ENCODE measurements at regions of chr5 and their contacts with region 1.

Region 1: DNA sequence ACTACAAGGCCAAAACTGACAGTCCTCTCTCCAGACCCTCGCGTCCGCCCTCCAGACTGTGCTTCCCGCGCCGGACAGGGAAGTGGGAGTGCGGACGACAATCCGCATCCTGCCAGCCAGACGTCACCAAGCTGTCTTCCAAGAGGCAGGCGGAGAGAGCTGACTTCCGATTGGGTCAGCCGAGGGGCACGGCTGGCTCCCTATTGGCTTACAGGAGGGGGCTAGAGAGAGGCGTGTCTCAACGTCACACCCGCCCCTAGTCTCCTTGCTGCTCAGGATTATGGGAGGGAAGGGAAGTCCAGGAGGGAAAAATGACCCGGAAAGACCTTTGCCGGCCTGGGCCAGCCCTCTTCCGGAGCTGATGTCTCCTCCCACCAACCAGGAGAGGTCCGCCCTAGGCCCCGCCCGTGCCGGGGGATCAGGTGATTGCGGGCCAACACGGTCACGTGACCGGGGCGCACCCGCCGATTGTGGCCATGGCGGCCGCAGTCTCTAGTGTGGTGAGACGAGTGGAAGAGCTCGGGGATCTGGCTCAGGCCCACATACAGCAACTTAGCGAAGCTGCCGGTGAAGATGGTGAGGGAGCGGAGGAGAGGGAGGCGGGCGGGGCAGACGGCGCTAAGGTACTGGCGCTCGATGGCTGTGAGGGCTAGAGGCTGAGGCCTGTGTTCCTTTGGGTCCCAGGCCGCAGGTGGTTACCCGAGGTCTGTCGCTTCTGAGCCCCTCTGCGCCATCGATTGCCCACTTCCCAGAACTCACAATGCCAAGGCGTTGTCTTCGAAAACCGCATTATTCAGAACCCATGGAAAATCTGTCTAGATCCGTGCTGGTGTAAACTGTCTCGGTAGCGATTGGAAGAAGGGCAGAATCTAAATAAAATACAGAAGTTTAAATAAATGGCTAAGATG is at the start of gene RIMOC1:
- DNase-seq: peak; percentile 99 to 100
- H3K4me3 ChIP-seq: peak within 1 kb of the TSS; percentile 83
- H3K27ac ChIP-seq: peak within 1 kb of the TSS; percentile 68
- H3K4me1 ChIP-seq: peaks cover 16% of the 10 kb centered on the region
- H3K27me3 ChIP-seq: no peaks in the 10 kb centered on the region
- CTCF ChIP-seq: no peak
- total RNA-seq, gene RIMOC1: 40.1 and 68.6 TPM in 2 replicates

Region 2: GRCh38 chr5:40834849-40835787 is 1069.0 kb before region 1 on chr5 and contains the start of gene RPL37:
- CTCF ChIA-PET with region 1: no interaction called
- POLR2A ChIA-PET with region 1: interaction called, 24 read pairs
- intact Hi-C with region 1: loop called (anchors 5 kb)
- DNase-seq: peak; percentile 97 to 100
- H3K4me3 ChIP-seq: peak within 1 kb of the TSS; percentile 86
- H3K27ac ChIP-seq: peak within 1 kb of the TSS; percentile 96
- H3K4me1 ChIP-seq: peaks cover 43% of the 10 kb centered on the region
- H3K27me3 ChIP-seq: no peaks in the 10 kb centered on the region
- CTCF ChIP-seq: no peak
- total RNA-seq, gene RPL37: 3,889 and 3,938 TPM in 2 replicates

Region 3: DNA sequence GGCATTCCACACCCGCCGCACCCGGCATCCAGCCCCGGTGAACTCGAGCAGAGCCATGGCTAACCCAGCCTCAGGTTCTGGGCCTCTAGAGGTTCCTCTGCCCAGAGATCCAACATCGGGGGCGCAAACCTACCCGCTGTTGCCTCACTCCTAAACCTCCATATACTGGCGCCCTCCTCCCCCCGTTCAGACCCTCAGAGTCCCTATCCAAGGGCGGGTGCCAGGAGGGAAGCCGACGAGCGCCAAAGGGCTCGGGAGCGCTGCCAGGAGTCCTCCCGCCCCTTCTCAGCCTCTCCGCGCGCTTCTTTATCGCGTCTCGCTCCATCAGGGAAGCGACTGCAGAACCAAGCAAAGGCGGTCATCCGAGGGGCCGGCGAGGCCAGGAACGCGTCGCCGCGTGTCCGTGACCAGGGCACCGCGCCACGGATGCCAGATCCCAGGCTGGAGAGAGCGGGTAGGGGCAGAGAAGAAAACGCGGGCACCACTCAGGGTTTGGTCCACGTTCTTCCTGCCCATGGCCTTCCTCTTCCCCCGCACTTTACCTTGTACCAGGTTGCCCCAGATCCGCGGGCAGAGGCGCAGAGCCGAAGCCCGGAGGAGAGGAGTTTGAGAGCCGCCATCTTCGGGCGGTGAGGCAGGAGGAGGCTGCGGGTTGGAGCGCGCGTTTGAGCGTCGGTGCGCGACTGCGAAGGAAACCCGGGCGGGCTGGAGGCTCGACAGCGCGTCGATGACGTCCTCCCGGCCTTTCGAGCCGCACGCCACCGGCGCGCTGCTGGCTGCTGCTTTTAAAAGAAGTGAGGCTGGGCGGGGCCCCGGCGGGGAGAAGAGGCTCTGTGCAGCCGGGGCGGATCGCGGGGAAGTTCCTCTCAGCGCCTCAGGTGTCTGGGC is 34.2 kb before region 1 on chr5 and contains the start of gene OXCT1:
- CTCF ChIA-PET with region 1: no interaction called
- POLR2A ChIA-PET with region 1: no interaction called
- intact Hi-C with region 1: loop called (anchors 1 kb)
- DNase-seq: peak; percentile 66 to 78
- H3K4me3 ChIP-seq: peak within 1 kb of the TSS; percentile 67
- H3K27ac ChIP-seq: no peak within 1 kb of the TSS
- H3K4me1 ChIP-seq: 0 out of 2 replicates have a peak, but pooled peaks cover 4% of the 10 kb centered on the region
- H3K27me3 ChIP-seq: peaks cover 24% of the 10 kb centered on the region
- CTCF ChIP-seq: no peak
- total RNA-seq, gene OXCT1: 22.5 and 29.7 TPM in 2 replicates

Measured in PC-9 (cell line).